Posterior cingulate gyrus (tissue), 11 donors: ENCODE measurements at regions of chr1 and their contacts with region 1.

Region 1: DNA sequence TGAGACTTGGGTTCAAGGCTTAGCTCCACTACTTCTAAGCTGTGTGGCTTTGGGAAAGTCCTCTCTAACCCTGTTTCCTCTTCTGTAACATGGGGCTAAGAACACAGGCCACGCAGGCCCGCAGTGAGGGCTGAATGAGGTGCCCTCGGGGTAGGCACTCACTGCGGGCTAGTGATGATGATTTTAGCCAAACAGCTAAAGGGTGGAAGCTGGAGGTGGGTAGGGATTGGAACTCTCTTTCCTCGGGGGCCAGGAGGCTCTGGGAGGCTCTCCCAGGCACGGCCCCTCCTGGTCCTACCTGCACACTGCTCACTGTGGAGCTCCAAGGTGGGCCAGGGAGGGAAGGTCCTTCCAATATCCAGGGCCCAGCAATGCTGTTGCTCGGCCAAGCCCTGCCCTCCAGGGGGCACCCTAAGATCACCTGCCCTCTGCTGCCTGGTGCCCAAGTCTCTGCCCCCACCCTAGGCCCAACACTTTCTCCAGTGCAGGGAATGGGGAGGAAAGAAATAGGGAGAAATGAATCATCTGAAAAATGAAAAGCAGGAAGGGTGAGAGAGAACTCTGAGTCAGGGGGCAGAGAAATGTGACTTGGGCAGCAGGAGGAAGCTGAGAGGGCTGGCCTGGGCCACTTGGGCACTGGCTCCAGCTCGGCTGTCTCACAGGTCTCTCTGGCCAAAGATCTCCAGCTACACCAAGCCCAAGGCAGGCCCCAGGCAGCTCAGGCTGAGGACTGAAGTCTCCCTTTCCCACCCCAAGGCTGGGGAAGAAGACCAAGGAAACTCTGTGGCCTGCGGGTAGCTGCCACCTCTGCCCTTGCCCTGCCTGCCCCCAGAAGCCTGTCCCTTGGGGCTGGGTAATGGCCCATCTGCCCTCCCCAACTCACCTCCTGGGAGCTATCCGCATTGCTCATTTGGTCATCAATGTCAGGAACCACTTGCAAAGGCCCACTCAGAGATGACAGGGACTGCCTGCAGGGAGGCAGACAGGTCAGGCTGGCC is 19.3 kb upstream of the EVA1B start:
- DNase-seq: peak in 6 of 10 donors; percentile 42 to 93 (median 69)

Region 2: GRCh38 chr1:36420836-36421664 is 78.3 kb after region 1 on chr1:
- intact Hi-C with region 1: loop called (anchors 1 kb)
- DNase-seq: peak; percentile 72 to 98 (median 96)